ENCODE measurements at regions of chr9 and their contacts with region 1.

Region 1: DNA sequence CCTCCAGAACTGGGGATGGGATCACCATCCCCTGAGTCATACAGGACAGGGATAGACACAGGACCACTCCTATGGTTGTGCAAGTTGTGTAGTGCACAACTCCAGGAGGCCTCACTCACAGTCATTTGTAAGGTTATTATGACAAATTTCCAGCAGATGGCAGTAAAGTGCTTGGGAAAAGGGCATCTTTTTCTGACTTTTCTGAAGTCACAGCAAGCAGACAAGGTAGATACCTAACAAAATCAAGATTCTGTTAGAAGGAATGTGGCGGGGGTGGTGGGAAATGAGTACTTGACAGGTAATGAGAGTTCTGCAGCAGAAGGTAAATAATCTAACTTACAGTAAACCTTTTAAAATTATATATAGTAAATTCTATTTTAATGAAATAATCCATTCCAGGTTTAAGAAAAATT is 16.7 kb upstream of the KIF27 start:
- DNase-seq: no peak

Region 2: DNA sequence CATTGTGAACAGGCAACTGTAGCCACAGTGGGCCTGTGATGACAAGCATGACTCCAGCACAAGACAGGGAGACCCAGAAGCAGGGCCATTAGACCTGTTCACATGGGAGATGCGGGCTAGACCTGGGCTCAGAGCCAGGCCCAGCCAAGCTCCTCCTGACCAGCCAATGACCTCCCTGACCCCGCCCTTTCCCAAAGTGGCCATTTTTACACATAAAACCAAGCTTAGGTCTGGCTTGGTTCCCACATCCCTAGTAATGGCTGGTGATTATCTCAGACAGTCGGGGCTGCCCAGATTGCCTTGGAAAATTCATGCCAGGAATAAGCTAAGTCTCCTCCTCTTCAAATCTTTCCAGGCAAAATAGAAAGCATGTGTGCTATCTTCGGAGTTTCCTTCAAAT is 493.8 kb before region 1 on chr9:
- intact Hi-C with region 1: no loop called
- DNase-seq: peak; percentile 81

Region 3: GRCh38 chr9:84170521-84171141 is 232.7 kb after region 1 on chr9:
- intact Hi-C with region 1: loop called in 1 of 2 experiments (anchors 5 kb)
- DNase-seq: no peak

Region 4: DNA sequence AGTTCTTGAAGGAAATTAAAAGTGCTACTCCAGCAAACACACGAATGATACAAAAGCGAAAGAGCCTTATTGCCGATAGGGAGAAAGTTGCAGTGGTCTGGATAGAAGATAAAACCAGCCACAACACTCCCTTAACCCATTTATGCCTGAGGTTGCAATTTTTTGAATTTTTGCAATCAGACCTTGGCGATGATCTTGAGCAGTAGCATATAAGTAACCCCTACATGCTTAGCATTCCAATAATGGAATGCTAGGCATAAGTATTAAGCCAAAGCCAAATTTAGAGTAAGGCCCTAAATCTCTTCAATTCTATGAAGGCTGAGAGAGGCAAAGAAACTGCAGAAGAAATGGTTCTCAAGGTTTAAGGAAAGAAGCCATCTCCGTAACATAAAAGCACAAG is 249.2 kb after region 1 on chr9:
- intact Hi-C with region 1: no loop called
- DNase-seq: no peak

Region 5: DNA sequence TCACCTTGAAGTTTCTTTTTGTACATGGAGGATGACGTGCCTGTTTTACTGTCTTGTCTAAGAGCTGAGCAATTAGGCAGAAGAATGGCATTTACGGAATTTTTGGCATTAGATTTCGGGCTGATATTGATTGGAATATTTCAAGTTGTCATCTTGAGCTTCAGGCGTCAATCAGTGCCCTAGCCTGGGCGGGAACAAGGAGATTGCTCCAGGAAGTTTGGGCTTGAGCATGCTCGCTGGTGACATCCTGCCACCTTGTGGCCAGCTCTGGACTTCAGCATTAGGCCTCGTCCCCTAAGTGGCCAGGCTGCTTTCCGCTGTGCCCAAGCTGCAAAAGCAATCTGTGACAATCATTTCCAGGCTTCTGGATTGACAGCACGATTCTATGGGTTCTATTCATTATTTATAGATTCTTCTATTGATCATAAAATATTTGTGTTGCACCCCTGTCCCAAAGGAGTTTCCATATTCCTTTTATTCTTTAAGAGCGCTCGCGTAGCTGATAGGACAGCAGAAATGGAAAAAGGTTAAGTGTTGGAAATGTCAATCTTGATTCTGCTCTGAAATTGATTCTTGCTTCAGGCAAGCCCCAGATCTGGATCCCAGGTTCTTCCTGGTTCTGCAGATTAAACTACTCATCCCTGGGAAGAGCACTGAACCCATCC is 323.3 kb after region 1 on chr9:
- intact Hi-C with region 1: loop called (anchors 1 to 2 kb)
- DNase-seq: peak; percentile 93

Region 6: GRCh38 chr9:84315278-84315877 is 377.5 kb after region 1 on chr9:
- intact Hi-C with region 1: loop called in 1 of 2 experiments (anchors 5 kb)
- DNase-seq: no peak